ENCODE measurements at regions of chr7 and their contacts with region 1.

Region 1: GRCh38 chr7:151237244-151238189 is 5.2 kb downstream of the CHPF2 start:
- DNase-seq: no peak
- H3K4me3 Mint-ChIP-seq: no peak overlapping the region
- H3K27ac Mint-ChIP-seq: no peak overlapping the region
- H3K4me1 Mint-ChIP-seq: peaks cover 26% of the 10 kb centered on the region
- H3K27me3 Mint-ChIP-seq: no peaks in the 10 kb centered on the region

Region 2: GRCh38 chr7:151226875-151227782 is 10.4 kb before region 1 on chr7 and contains the start of gene ABCF2:
- CTCF ChIA-PET with region 1: interaction called, 47 read pairs
- POLR2A ChIA-PET with region 1: interaction called, 38 read pairs
- DNase-seq: peak; percentile 99
- H3K4me3 Mint-ChIP-seq: peak within 1 kb of the TSS; percentile 98
- H3K27ac Mint-ChIP-seq: peak within 1 kb of the TSS; percentile 83
- H3K4me1 Mint-ChIP-seq: peaks cover 46% of the 10 kb centered on the region
- H3K27me3 Mint-ChIP-seq: no peaks in the 10 kb centered on the region
- total RNA-seq, gene ABCF2: 23.1 to 27.6 TPM

Region 3: DNA sequence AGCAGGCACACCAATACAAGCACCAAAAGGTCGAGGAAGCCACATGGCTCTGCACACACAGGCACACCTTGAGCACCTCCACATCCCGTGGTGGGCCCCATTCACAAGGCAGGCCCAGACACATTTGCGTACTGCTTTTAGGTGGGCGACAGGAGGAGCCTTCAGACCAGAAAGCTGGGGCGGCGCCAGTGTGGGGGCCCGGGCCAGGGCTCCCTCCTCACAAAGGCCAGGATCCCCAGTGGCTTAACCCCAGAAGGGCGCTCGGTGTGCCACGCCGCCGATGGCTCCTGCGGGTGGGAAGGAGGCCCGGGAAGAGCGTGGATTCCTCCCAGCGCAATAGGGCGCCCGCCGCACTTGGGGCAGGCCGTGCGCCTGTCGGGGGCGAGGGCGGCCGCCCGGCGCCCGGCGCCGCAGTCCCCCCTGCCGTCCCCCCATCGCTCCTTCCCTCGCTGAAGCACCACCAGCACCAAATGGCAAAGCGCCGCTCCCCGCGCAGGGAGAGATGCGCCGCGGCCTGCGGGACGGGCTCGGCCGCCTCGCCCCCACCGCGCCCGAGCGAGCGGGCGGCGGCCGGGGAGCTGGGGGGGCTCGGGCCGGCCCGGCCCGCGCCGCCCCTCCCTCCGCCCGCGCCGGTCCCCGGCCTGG is 13.9 kb after region 1 on chr7:
- CTCF ChIA-PET with region 1: no interaction called
- POLR2A ChIA-PET with region 1: no interaction called
- DNase-seq: no peak
- H3K4me3 Mint-ChIP-seq: no peak overlapping the region
- H3K27ac Mint-ChIP-seq: no peak overlapping the region
- H3K4me1 Mint-ChIP-seq: peaks cover 18% of the 10 kb centered on the region
- H3K27me3 Mint-ChIP-seq: peaks cover 83% of the 10 kb centered on the region

Region 4: GRCh38 chr7:151261529-151261928 is 24.0 kb after region 1 on chr7:
- CTCF ChIA-PET with region 1: no interaction called
- POLR2A ChIA-PET with region 1: no interaction called
- DNase-seq: no peak
- H3K4me3 Mint-ChIP-seq: no peak overlapping the region
- H3K27ac Mint-ChIP-seq: no peak overlapping the region
- H3K4me1 Mint-ChIP-seq: no peaks in the 10 kb centered on the region
- H3K27me3 Mint-ChIP-seq: peaks cover 17% of the 10 kb centered on the region

Measured in activated CD4-positive, alpha-beta memory T cell treated with anti-CD3 and anti-CD28 coated beads, Interleukin-2, amount 10 ng/mL, durations not matched to agents 7 days and 5 days (primary cell).